T-cell (primary cell): ENCODE measurements at regions of chr6 and their contacts with region 1.

Region 1: GRCh38 chr6:150930826-150931225 is 65.3 kb downstream of the MTHFD1L start:
- DNase-seq: no peak
- ATAC-seq: no peak
- H3K4me3 ChIP-seq: no peak overlapping the region
- H3K4me3 Mint-ChIP-seq: no peak overlapping the region
- H3K27ac ChIP-seq: no peak overlapping the region
- H3K27ac Mint-ChIP-seq: no peak overlapping the region
- H3K4me1 ChIP-seq: no peaks in the 10 kb centered on the region
- H3K4me1 Mint-ChIP-seq: no peaks in the 10 kb centered on the region
- H3K27me3 ChIP-seq: no peaks in the 10 kb centered on the region
- H3K27me3 Mint-ChIP-seq: no peaks in the 10 kb centered on the region

Region 2: DNA sequence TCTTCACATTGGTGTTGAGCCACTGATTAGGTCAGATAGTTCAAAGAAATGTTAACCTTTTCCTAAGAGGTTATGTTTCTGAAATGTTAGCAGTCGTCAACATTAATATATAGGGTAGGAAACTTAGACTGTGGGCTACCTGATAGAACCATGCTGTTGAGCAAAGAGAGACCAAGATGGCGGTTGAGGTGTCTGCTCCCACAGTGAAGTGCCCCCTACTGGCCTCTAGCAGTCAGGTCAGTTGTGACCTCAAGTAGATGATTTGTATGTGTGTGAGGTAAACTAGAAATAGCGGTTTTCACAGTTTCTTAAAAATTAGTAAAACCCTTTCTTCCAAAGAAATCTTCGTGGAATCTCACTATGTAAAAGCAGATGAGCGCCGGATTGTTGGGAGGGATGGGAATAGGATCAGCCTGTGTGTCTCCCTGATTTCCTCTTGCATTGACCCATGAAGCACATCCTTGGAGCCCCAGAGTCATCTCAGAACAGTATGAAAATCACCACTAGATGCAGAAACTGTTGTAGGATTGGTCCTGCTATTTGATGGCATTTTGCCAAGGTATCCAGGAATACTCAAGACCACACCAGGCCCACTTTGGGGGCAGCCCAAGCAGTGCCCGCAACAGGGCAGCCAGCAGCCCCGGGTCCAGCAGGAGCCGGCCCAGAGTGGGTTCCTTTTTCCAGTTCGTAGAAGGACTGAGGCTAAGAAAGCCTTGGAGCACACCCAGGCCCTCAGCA is 24.9 kb before region 1 on chr6:
- CTCF ChIA-PET with region 1: no interaction called
- POLR2A ChIA-PET with region 1: interaction called in 1 of 2 experiments, 12 read pairs
- DNase-seq: no peak
- ATAC-seq: no peak
- H3K4me3 ChIP-seq: no peak overlapping the region
- H3K4me3 Mint-ChIP-seq: no peak overlapping the region
- H3K27ac ChIP-seq: no peak overlapping the region
- H3K27ac Mint-ChIP-seq: no peak overlapping the region
- H3K4me1 ChIP-seq: no peaks in the 10 kb centered on the region
- H3K4me1 Mint-ChIP-seq: no peaks in the 10 kb centered on the region
- H3K27me3 ChIP-seq: no peaks in the 10 kb centered on the region
- H3K27me3 Mint-ChIP-seq: no peaks in the 10 kb centered on the region

Region 3: DNA sequence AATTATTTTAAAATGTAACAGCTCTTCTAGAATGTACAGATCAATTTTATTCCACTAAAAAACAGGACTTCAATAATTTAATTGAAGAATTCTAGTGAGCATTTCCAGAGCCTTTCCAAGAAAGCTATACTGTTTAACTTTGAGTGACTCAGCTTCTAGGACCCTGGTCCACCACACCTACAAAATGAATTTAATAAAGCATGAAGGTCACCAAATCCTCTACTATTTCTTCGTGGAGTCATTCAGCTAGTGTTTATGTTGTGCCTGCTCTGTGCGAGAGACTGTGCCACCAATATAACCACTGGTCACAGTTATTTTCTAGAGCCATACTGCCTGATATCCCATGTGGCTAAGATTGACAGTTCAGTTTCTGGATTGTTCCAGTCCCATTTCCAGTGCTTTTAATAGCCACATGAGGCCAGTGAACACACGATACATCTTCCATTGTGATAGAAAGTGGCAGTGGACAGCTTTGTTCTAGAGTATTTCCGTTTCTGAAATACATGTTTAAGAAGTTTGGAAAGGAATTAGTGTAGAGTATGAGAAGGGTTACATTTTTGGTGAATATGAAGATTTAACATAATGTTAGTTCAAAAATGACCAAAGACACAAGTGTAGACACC is 95.3 kb after region 1 on chr6:
- CTCF ChIA-PET with region 1: no interaction called
- POLR2A ChIA-PET with region 1: interaction called in 1 of 2 experiments, 12 read pairs
- DNase-seq: no peak
- ATAC-seq: no peak
- H3K4me3 ChIP-seq: no peak overlapping the region
- H3K4me3 Mint-ChIP-seq: no peak overlapping the region
- H3K27ac ChIP-seq: no peak overlapping the region
- H3K27ac Mint-ChIP-seq: no peak overlapping the region
- H3K4me1 ChIP-seq: no peaks in the 10 kb centered on the region
- H3K4me1 Mint-ChIP-seq: no peaks in the 10 kb centered on the region
- H3K27me3 ChIP-seq: no peaks in the 10 kb centered on the region
- H3K27me3 Mint-ChIP-seq: no peaks in the 10 kb centered on the region